Esophagus muscularis mucosa (tissue), 4 donors: ENCODE measurements at regions of chr6 and their contacts with region 1.

Region 1: GRCh38 chr6:7389451-7390225 is at the starts of genes CAGE1 and RIOK1:
- DNase-seq: peak; percentile 98
- H3K4me3 ChIP-seq: peak within 1 kb of the TSS; percentile 68 to 89 (median 84)
- H3K27ac ChIP-seq: peak within 1 kb of the TSS; percentile 87 to 95 (median 93)
- H3K4me1 ChIP-seq: peaks cover 16 to 33% (median 30%) of the 10 kb centered on the region in 4 donors
- H3K27me3 ChIP-seq: no peaks in the 10 kb centered on the region
- CTCF ChIP-seq: peak in 2 of 3 experiments; percentile 5 to 7
- EP300 ChIP-seq: no peak
- POLR2A ChIP-seq: peak; percentile 35
- total RNA-seq, gene CAGE1: not detected
- total RNA-seq, gene RIOK1: 14.1 to 20.2 (median 17.5) TPM

Region 2: GRCh38 chr6:7282097-7282906 is 107.3 kb before region 1 on chr6:
- intact Hi-C with region 1: loop called (anchors 10 kb)
- DNase-seq: no peak
- H3K4me3 ChIP-seq: no peak overlapping the region
- H3K27ac ChIP-seq: no peak overlapping the region
- H3K4me1 ChIP-seq: peaks cover 0 to 4% (median 0%) of the 10 kb centered on the region in 4 donors
- H3K27me3 ChIP-seq: no peaks in the 10 kb centered on the region
- CTCF ChIP-seq: no peak
- EP300 ChIP-seq: no peak
- POLR2A ChIP-seq: no peak

Region 3: DNA sequence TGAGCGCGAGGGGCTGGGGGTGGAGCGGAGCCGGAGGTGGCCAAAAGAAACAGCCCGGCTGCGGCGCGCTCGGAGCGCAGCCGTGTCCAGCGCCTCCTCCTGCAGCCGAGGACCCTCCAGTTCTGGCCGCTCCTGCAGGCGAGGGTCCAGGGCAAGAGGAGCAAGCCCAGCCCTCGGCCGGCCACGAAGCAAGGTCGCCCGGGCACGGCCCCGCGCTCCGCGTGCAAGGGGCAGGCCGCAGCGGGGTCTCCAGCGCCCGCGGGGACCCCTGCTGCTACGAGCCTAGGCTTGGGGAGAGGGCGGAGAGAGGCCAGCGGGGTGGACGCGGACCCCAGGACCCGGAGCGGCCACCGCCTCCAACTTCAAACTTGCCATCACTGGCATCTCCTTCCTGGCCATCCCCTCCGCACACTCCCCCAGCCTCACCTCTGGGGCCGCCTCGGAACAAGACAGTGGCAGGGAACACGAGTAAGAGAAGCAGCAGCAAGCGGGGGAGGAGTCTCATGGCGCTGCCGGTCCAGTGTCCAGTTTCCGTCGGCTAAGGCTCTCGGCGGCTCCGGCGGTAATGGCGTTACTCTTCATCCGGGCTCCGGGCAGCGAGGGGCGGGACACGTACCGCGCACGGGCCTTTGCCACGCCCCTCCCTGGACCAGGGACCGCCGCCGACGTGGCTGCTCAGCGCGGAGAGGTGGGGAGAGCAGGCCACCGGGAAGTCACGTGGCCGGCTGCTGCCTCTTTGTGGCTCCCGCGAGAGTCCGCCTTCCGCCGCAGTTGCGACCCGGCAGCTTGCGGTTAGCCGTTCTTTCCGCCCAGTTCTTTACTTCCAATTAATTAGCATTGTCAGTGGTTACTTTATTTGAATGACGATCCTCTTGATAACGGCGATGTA is 76.8 kb before region 1 on chr6 and contains the start of gene SSR1:
- intact Hi-C with region 1: loop called (anchors 1 kb)
- DNase-seq: peak; percentile 98
- H3K4me3 ChIP-seq: peak within 1 kb of the TSS; percentile 84 to 99 (median 96)
- H3K27ac ChIP-seq: peak within 1 kb of the TSS; percentile 91 to 99 (median 95)
- H3K4me1 ChIP-seq: peaks cover 22 to 38% (median 36%) of the 10 kb centered on the region in 4 donors
- H3K27me3 ChIP-seq: peaks cover 0 to 7% (median 0%) of the 10 kb centered on the region in 4 donors
- CTCF ChIP-seq: peak in 2 of 3 experiments; percentile 11 to 19
- EP300 ChIP-seq: no peak
- POLR2A ChIP-seq: peak; percentile 15
- total RNA-seq, gene SSR1: 29.5 to 41.3 (median 34.2) TPM